Endothelial cell of umbilical vein (primary cell): ENCODE measurements at regions of chr3 and their contacts with region 1.

Region 1: DNA sequence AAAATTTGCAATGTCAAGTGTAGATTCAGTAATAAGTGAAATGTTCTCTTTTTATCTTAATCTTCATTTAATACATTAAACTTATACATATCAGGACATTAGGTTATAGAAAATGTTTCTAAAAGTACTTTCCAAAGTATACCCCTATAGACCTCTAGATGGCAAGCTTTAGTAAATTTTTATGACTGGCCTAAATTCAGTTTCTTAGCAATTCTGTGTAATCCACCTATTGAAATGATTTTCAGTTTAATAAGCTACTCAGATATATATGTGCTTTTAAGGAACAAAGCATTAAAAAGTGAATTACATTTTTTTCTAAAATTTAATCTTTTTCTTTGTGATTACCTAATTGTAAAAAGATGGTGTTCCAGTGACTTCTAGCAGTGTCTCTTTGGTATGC is 342.2 kb downstream of the GBE1 start:
- DNase-seq: peak; percentile 43
- H3K4me3 ChIP-seq: no peak overlapping the region
- H3K27ac ChIP-seq: no peak overlapping the region
- H3K4me1 ChIP-seq: peaks cover under 1% of the 10 kb centered on the region
- H3K27me3 ChIP-seq: no peaks in the 10 kb centered on the region
- CTCF ChIP-seq: peak; percentile 21 to 32
- POLR2A ChIP-seq: no peak

Region 2: DNA sequence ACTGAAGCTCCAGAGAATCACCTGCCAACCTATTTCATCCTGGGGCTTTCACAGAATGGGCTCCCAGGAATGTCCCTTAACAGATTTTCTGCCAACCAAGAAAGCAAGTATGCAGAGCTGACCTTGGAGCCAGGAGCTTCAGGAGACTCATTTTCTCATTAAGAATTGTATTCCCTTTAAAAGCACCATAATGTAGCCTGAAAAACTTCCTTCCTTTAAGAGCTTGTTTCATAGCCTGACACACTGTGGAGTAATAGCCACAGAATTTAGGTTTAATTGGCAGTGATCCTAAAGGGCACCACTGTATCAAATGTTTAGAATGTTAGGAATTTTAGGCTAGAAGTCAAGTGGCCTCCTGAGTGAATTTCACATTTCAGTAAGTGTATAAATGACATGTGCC is 32.4 kb after region 1 on chr3:
- CTCF ChIA-PET with region 1: interaction called, 12 read pairs
- POLR2A ChIA-PET with region 1: no interaction called
- dilution Hi-C with region 1: no loop called
- intact Hi-C with region 1: no loop called
- DNase-seq: peak; percentile 44
- H3K4me3 ChIP-seq: no peak overlapping the region
- H3K27ac ChIP-seq: no peak overlapping the region
- H3K4me1 ChIP-seq: no peaks in the 10 kb centered on the region
- H3K27me3 ChIP-seq: no peaks in the 10 kb centered on the region
- CTCF ChIP-seq: no peak
- POLR2A ChIP-seq: no peak

Region 3: GRCh38 chr3:81476692-81477091 is 57.5 kb after region 1 on chr3:
- CTCF ChIA-PET with region 1: interaction called, 15 read pairs
- POLR2A ChIA-PET with region 1: no interaction called
- dilution Hi-C with region 1: no loop called
- intact Hi-C with region 1: no loop called
- DNase-seq: no peak
- H3K4me3 ChIP-seq: no peak overlapping the region
- H3K27ac ChIP-seq: no peak overlapping the region
- H3K4me1 ChIP-seq: peaks cover 26% of the 10 kb centered on the region
- H3K27me3 ChIP-seq: no peaks in the 10 kb centered on the region
- CTCF ChIP-seq: no peak
- POLR2A ChIP-seq: no peak

Region 4: GRCh38 chr3:81490541-81491288 is 71.5 kb after region 1 on chr3:
- CTCF ChIA-PET with region 1: interaction called, 64 read pairs
- POLR2A ChIA-PET with region 1: no interaction called
- dilution Hi-C with region 1: no loop called
- intact Hi-C with region 1: loop called (anchors 1 kb)
- DNase-seq: peak; percentile 80
- H3K4me3 ChIP-seq: no peak overlapping the region
- H3K27ac ChIP-seq: no peak overlapping the region
- H3K4me1 ChIP-seq: peaks cover 5% of the 10 kb centered on the region
- H3K27me3 ChIP-seq: no peaks in the 10 kb centered on the region
- CTCF ChIP-seq: peak; percentile 75 to 80
- POLR2A ChIP-seq: no peak

Region 5: GRCh38 chr3:81581966-81582599 is 162.9 kb after region 1 on chr3:
- CTCF ChIA-PET with region 1: interaction called, 17 read pairs
- POLR2A ChIA-PET with region 1: no interaction called
- dilution Hi-C with region 1: no loop called
- intact Hi-C with region 1: no loop called
- DNase-seq: peak; percentile 50
- H3K4me3 ChIP-seq: no peak overlapping the region
- H3K27ac ChIP-seq: no peak overlapping the region
- H3K4me1 ChIP-seq: no peaks in the 10 kb centered on the region
- H3K27me3 ChIP-seq: no peaks in the 10 kb centered on the region
- CTCF ChIP-seq: peak; percentile 62 to 66
- POLR2A ChIP-seq: no peak

Region 6: GRCh38 chr3:82133070-82133606 is 713.9 kb after region 1 on chr3:
- CTCF ChIA-PET with region 1: interaction called, 4 read pairs
- POLR2A ChIA-PET with region 1: no interaction called
- dilution Hi-C with region 1: no loop called
- intact Hi-C with region 1: loop called (anchors 1 kb)
- DNase-seq: peak; percentile 71
- H3K4me3 ChIP-seq: no peak overlapping the region
- H3K27ac ChIP-seq: no peak overlapping the region
- H3K4me1 ChIP-seq: no peaks in the 10 kb centered on the region
- H3K27me3 ChIP-seq: no peaks in the 10 kb centered on the region
- CTCF ChIP-seq: peak; percentile 75 to 77
- POLR2A ChIP-seq: no peak